ENCODE measurements at regions of chr11 and their contacts with region 1.

Region 1: DNA sequence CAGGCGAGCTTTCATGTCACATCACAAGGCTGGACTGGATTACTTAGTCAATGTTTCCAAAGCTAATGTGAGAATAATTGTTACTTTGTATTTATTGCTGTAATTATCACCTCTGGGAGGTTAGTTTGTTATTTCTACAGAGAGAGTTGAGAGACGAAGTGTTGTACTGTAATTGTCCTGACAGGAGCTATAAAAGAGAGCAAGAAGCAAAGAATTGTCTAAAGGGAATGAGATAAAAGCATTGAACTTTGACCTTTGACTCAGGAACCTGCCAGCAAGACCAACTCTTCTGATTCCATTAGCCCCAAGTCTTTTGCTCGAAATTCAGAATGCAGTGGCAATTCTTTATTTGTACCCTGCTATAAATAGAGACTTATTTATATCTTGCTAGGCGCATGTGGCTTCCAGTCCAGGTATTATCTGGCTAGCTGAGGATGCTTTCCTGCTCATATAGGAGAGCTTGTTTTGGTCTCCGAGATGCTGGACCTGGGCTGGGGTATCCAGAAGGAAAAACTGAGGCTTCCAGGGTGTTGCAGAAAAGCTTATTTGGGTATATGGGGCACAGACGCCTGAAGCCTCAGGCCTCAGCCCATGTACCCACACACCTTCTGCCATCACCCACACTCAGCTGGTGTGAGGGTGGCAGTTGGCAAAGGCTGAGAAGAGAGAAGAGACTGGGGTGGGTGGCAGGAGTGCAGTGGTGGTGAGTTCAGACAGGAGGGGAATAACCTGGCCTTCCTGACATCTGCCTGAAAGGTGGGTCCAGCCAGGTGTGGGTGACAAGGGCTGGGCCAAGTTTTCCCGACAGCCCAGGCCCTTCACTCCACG is 40.7 kb downstream of the SYT13 start:
- DNase-seq: no peak
- H3K4me3 ChIP-seq: no peak overlapping the region
- H3K27ac ChIP-seq: no peak overlapping the region
- H3K4me1 ChIP-seq: no peaks in the 10 kb centered on the region
- H3K27me3 ChIP-seq: no peaks in the 10 kb centered on the region
- CTCF ChIP-seq: no peak
- POLR2A ChIP-seq: no peak

Region 2: DNA sequence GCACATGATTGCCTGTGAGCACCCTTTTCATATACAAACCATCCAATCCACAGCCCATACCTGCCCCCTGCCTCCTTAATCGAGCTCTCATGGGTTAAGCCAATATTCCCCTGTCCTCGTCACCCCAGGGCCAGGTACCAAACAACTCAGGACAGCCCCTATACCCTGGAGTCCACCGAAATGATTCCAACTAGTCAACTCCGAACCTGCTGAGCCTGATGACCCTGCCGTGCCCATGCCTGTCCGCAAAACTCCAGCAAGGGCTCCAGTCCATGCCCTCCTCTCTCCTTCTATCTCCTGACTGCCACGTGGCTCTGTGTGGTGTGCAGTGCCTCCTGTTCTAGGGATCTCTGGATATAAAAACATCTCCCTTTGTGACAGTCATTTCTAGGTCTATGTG is 76.2 kb after region 1 on chr11:
- intact Hi-C with region 1: loop called (anchors 1 kb)
- DNase-seq: peak in 1 of 2 donors; percentile 70
- H3K4me3 ChIP-seq: no peak overlapping the region
- H3K27ac ChIP-seq: no peak overlapping the region
- H3K4me1 ChIP-seq: no peaks in the 10 kb centered on the region
- H3K27me3 ChIP-seq: no peaks in the 10 kb centered on the region
- CTCF ChIP-seq: no peak
- POLR2A ChIP-seq: no peak